Activated CD8-positive, alpha-beta T cell treated with anti-CD3 and anti-CD28 coated beads for 36 hours (primary cell): ENCODE measurements at regions of chr19 and their contacts with region 1.

Region 1: DNA sequence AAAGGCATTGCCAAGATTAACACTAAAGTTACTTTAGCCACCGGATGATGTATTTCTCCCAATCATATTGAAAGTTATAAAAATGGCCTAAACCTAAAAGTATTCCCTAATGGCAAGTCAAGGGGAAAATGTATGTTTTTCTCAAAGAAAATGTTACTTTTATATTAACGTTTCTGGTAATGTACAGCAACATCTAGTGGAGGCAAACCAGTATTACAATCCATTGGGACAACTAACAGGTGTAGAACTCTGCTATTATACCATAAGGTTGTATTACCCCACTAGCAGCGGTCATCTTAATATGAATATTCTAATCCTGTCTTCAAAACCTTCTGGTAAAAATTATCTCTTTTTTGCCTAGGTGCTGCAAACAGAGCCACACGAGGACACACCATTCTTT is 69.2 kb downstream of the ZNF100 start:
- DNase-seq: no peak
- ATAC-seq: peak; percentile 61
- H3K4me3 Mint-ChIP-seq: no peak overlapping the region
- H3K27ac Mint-ChIP-seq: no peak overlapping the region
- H3K4me1 Mint-ChIP-seq: no peaks in the 10 kb centered on the region
- H3K27me3 Mint-ChIP-seq: no peaks in the 10 kb centered on the region
- CTCF ChIP-seq: peak; percentile 75

Region 2: GRCh38 chr19:21202865-21203494 is 495.2 kb before region 1 on chr19:
- CTCF ChIA-PET with region 1: interaction called, 4 read pairs
- POLR2A ChIA-PET with region 1: no interaction called
- intact Hi-C with region 1: loop called (anchors 2 kb)
- DNase-seq: peak; percentile 41
- ATAC-seq: peak; percentile 61
- H3K4me3 Mint-ChIP-seq: no peak overlapping the region
- H3K27ac Mint-ChIP-seq: no peak overlapping the region
- H3K4me1 Mint-ChIP-seq: no peaks in the 10 kb centered on the region
- H3K27me3 Mint-ChIP-seq: peaks cover 6% of the 10 kb centered on the region
- CTCF ChIP-seq: peak; percentile 92